Endothelial cell of umbilical vein (primary cell): ENCODE measurements at regions of chr1 and their contacts with region 1.

Region 1: DNA sequence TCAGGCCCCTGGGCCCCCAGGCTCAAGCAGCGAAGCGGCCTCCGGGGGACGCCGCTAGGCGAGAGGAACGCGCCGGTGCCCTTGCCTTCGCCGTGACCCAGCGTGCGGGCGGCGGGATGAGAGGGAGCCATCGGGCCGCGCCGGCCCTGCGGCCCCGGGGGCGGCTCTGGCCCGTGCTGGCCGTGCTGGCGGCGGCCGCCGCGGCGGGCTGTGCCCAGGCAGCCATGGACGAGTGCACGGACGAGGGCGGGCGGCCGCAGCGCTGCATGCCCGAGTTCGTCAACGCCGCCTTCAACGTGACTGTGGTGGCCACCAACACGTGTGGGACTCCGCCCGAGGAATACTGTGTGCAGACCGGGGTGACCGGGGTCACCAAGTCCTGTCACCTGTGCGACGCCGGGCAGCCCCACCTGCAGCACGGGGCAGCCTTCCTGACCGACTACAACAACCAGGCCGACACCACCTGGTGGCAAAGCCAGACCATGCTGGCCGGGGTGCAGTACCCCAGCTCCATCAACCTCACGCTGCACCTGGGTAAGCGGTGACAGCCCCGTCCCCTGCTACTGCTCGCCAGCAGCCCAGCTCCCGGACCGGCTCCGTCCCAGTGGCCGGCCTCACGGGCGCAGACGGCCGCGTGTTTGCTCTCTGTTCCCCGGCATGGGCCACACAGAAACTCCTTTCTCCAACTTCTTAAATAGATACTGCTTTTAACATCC is 539 bp downstream of the LAMC1 start:
- DNase-seq: peak; percentile 78
- H3K4me3 ChIP-seq: peak overlapping the region; percentile 71 to 96 (median 96)
- H3K27ac ChIP-seq: peak overlapping the region; percentile 68
- H3K4me1 ChIP-seq: peaks cover 44% of the 10 kb centered on the region
- H3K27me3 ChIP-seq: no peaks in the 10 kb centered on the region
- CTCF ChIP-seq: peak; percentile 41 to 76
- POLR2A ChIP-seq: no peak

Region 2: GRCh38 chr1:182739545-182739944 is 284.2 kb before region 1 on chr1:
- CTCF ChIA-PET with region 1: no interaction called
- POLR2A ChIA-PET with region 1: no interaction called
- dilution Hi-C with region 1: no loop called
- intact Hi-C with region 1: no loop called
- DNase-seq: no peak
- H3K4me3 ChIP-seq: no peak overlapping the region
- H3K27ac ChIP-seq: no peak overlapping the region
- H3K4me1 ChIP-seq: no peaks in the 10 kb centered on the region
- H3K27me3 ChIP-seq: no peaks in the 10 kb centered on the region
- CTCF ChIP-seq: no peak
- POLR2A ChIP-seq: no peak

Region 3: GRCh38 chr1:183039985-183040447 is 16.3 kb after region 1 on chr1:
- CTCF ChIA-PET with region 1: interaction called, 4 read pairs
- POLR2A ChIA-PET with region 1: no interaction called
- dilution Hi-C with region 1: no loop called
- intact Hi-C with region 1: loop called (anchors 2 kb)
- DNase-seq: peak; percentile 77
- H3K4me3 ChIP-seq: no peak overlapping the region
- H3K27ac ChIP-seq: peak overlapping the region; percentile 59
- H3K4me1 ChIP-seq: peaks cover 29% of the 10 kb centered on the region
- H3K27me3 ChIP-seq: no peaks in the 10 kb centered on the region
- CTCF ChIP-seq: no peak
- POLR2A ChIP-seq: no peak

Region 4: DNA sequence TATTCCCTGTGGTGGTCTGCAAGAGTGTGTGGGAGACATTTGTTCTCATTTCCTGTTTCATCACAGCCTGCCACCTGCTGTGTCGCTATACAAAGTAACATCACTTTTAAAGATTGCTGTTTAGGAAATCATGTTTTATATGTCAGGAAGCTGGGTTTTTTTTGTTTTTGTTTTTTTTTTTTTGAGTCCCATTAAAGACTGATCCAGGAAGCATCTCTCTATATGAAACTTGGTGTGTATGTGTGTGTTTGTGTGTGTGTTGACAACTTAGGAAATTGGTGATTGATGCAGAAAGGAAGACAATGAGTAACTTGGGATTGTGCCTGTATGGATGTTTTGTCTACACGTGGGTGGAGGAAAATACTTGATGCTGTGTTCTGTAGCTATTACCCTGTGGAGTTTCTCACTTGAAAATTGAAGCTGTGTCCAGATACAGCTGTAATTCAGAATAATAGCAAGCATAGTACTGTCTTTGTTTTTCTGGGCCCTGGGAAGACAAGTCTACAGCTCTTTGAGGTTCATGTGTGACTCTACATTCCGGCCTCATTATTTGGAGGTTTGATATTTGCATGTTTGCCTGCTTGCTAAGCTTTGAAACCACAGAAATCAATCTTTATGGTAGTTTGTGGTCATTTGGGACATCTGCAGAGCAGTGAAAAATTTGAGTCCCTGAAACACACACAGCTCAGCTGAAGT is 47.3 kb after region 1 on chr1:
- CTCF ChIA-PET with region 1: interaction called, 8 read pairs
- POLR2A ChIA-PET with region 1: no interaction called
- dilution Hi-C with region 1: no loop called
- intact Hi-C with region 1: loop called (anchors 1 kb)
- DNase-seq: peak; percentile 94
- H3K4me3 ChIP-seq: no peak overlapping the region
- H3K27ac ChIP-seq: peak overlapping the region; percentile 44
- H3K4me1 ChIP-seq: peaks cover 22% of the 10 kb centered on the region
- H3K27me3 ChIP-seq: no peaks in the 10 kb centered on the region
- CTCF ChIP-seq: no peak
- POLR2A ChIP-seq: no peak

Region 5: GRCh38 chr1:183180634-183181056 is 156.9 kb after region 1 on chr1:
- CTCF ChIA-PET with region 1: no interaction called
- POLR2A ChIA-PET with region 1: no interaction called
- dilution Hi-C with region 1: no loop called
- intact Hi-C with region 1: loop called (anchors 1 kb)
- DNase-seq: peak; percentile 86
- H3K4me3 ChIP-seq: no peak overlapping the region
- H3K27ac ChIP-seq: peak overlapping the region; percentile 90
- H3K4me1 ChIP-seq: peaks cover 16% of the 10 kb centered on the region
- H3K27me3 ChIP-seq: no peaks in the 10 kb centered on the region
- CTCF ChIP-seq: no peak
- POLR2A ChIP-seq: no peak

Region 6: GRCh38 chr1:183234660-183235476 is 211.1 kb after region 1 on chr1:
- CTCF ChIA-PET with region 1: interaction called, 11 read pairs
- POLR2A ChIA-PET with region 1: no interaction called
- dilution Hi-C with region 1: no loop called
- intact Hi-C with region 1: loop called (anchors 1 kb)
- DNase-seq: peak; percentile 98
- H3K4me3 ChIP-seq: peak overlapping the region; percentile 13 to 77 (median 18)
- H3K27ac ChIP-seq: peak overlapping the region; percentile 81
- H3K4me1 ChIP-seq: peaks cover 30% of the 10 kb centered on the region
- H3K27me3 ChIP-seq: no peaks in the 10 kb centered on the region
- CTCF ChIP-seq: peak; percentile 69 to 71
- POLR2A ChIP-seq: no peak

Region 7: DNA sequence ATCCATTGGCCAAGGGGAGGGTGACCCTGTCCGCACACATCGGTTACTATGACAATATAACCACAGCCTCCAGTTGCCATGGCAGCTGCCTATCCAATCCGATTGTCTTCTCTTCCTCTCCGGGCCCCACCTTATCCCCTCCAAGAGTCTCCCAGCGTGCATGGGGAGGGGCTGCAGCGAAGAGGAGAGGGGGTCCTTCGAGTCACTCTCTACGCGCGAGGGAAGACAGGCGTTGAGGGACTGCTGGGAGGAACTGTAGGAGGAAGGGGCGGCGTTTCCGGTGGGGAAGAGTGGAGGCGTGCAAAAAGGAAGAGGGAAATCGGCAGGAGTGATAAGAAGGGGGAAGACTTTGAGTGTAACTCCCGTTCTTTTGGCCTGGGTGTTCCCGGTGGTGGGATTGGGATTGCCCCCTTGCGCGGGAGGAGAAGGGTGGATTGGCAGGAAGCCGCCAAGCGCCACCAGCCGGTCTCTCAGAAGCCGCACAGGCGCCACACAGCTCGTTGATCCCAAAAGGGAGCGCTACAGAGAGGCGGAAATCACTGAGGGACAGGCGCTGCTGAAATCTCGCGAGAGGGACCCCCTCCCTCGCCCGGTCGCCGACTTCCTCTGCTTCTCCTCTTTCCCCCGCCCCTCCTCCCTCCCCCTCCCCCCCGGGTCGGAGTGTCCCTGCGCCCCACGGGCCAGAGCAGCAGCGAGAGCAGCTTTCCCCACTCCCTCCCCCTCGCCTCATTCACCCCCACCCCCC is 448.2 kb after region 1 on chr1:
- CTCF ChIA-PET with region 1: no interaction called
- POLR2A ChIA-PET with region 1: no interaction called
- dilution Hi-C with region 1: no loop called
- intact Hi-C with region 1: loop called (anchors 5 kb)
- DNase-seq: peak; percentile 96
- H3K4me3 ChIP-seq: peak overlapping the region; percentile 62 to 91 (median 89)
- H3K27ac ChIP-seq: peak overlapping the region; percentile 90
- H3K4me1 ChIP-seq: peaks cover 19% of the 10 kb centered on the region
- H3K27me3 ChIP-seq: no peaks in the 10 kb centered on the region
- CTCF ChIP-seq: peak in 1 of 2 donors; percentile 11
- POLR2A ChIP-seq: no peak